SK-N-SH (cell line): ENCODE measurements at regions of chr2 and their contacts with region 1.

Region 1: DNA sequence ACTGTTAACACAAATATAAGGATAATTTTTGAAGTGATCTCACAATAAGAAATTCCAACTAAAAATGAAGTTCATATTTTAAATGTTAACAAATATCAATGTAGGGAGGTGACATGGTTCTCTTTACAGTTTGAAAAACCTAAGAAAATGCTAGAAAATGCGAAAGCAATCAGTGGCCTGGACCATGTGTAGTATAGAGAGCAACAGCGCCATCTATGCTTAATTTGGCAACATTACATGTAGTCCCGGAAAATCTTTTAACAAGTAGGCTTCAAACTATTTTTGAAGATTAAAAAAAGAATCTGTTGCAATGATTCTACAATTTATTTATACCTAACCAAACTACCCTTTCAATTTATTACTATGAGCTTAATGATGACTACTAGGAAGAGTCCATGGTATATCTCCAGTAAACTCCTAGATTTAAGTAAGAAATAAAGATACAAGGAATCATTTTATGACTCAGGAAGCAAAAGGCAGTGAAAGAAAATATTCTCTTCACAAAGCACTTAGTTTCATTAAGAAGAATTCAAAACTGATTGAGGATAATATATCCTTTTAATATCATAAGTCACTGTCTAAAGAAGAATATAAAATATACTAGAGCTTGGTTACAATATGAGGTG is 33.3 kb downstream of the NDUFA10 start:
- DNase-seq: peak; percentile 63
- H3K4me3 ChIP-seq: peak overlapping the region in 1 of 2 experiments; percentile 33; a peak in 1 of 4 replicates
- H3K27ac ChIP-seq: no peak overlapping the region
- H3K4me1 ChIP-seq: peaks cover 0 to 7% of the 10 kb centered on the region in 2 experiments; a peak in 1 of 4 replicates
- H3K27me3 ChIP-seq: no peaks in the 10 kb centered on the region
- CTCF ChIP-seq: peak; percentile 95
- EP300 ChIP-seq: no peak
- RAD21 ChIP-seq: peak; percentile 88

Region 2: DNA sequence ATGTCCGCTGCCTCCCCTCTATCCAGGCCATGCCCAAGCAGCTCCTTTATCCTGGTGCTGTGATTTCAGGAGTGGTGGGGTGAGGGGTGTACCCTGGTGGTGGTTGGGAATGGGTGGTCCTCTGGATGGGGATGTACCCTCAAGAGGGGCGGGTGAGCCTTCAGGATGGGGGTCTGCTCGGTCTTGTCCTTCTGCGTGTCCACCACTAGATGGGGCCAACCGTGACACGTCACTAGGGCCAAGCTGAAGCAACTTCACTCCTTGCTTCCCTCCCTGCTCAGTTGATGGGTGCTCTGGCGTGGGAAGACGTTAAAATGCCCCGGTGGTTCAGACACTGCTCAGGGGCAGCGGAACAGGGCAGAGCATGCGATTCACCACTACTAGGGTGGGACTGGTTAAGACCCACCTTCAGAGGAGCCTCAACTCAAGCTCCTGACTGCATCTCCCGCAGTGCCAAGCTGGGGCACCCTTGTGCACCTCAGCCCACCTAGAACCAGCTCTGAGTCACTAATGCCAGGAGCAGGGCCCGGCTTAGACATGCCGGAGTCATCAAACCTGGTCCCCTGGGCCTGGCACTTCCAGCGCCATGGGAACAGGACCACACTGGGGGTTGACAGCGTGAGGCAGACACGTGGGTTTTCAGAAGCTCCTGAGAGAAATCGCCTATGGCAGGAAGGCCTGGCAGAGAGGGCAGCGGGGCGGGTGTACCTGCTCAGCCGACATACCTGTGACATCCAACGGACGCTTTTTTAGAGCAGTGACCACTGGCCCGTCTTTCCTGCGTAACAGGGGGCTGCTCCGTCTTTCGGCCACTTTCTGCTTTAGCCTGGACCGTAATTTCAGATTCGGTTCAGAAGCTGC is 847.7 kb before region 1 on chr2:
- CTCF ChIA-PET with region 1: interaction called, 19 read pairs
- POLR2A ChIA-PET with region 1: no interaction called
- DNase-seq: peak; percentile 85
- H3K4me3 ChIP-seq: no peak overlapping the region
- H3K27ac ChIP-seq: no peak overlapping the region
- H3K4me1 ChIP-seq: no peaks in the 10 kb centered on the region; a peak in 1 of 4 replicates
- H3K27me3 ChIP-seq: no peaks in the 10 kb centered on the region
- CTCF ChIP-seq: peak; percentile 68
- EP300 ChIP-seq: no peak
- RAD21 ChIP-seq: peak; percentile 71

Region 3: DNA sequence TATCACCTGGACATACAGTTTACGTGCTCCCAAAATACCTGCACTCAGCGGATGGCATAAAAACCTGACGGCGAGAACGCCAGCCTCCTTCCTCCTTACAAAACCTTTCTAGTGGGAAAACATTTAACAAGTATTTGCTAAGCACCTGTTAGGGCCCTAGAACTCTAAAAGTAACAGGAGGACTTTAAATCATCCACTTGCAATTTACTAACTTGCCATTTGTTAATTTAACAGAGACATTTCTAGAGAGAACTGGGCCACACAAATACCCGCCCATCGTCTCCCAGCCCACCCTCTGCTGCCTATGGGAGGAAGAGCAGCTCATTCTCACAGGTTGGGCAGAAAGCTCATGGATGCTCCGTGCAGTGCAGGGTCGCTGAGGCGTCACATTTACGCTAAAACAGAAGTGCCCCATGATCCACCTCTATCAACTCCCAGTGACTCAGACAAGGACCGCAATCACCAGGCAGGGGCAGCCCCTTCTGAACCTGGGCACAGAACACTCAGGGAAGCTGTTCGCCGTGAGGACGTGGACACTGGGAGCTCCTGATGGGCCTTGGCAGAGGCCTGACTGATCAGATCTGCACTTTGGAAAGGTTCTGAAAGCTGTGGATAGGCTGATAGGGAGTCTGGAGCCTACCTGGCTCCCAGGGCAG is 697.9 kb before region 1 on chr2:
- CTCF ChIA-PET with region 1: no interaction called
- POLR2A ChIA-PET with region 1: no interaction called
- DNase-seq: no peak
- H3K4me3 ChIP-seq: no peak overlapping the region
- H3K27ac ChIP-seq: no peak overlapping the region
- H3K4me1 ChIP-seq: peaks cover 0 to 47% of the 10 kb centered on the region in 2 experiments; a peak in 2 of 4 replicates
- H3K27me3 ChIP-seq: no peaks in the 10 kb centered on the region
- CTCF ChIP-seq: no peak
- EP300 ChIP-seq: no peak
- RAD21 ChIP-seq: no peak

Region 4: DNA sequence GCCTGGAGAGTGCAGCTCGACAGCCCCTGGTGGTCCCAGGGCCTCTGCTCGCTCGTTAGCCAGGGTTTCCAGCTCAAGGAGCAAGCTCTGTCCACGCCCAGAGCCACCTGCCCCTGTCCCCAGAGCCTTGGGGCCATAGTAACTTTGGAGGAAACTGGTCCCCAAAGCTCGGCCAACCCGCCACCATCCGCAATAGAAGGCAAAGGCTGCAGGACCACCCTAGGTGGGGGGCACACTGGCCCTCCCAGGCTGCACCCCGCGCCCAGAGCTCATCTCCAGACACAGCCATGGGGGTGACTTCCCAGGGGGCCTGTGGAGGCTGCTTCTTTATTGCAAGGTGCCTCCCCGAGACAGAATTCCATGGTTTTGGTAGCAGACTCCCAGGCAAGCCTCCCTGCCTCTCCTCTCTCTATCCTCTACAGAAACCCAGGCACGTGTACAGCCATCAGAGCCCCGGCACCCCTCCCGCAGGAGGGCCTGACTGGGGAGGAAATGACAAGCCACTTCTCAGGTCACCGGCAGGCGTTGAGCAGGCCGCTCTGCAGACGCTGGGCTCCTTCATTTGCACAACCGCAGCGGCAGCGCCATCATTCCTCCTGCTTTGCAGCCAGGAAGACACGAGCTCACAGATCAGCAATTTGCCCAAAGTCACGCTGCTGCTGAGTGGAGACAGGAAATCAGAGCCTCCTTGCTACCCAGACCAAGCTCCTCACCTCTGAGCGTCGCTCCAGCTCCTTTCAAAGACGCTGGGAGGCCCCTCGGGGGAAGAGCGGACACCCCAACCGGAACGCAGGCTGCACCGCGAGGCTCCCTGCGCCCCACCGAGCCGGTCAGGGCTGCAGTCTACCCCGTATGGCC is 46.9 kb before region 1 on chr2:
- CTCF ChIA-PET with region 1: interaction called, 24 read pairs
- POLR2A ChIA-PET with region 1: no interaction called
- DNase-seq: no peak
- H3K4me3 ChIP-seq: no peak overlapping the region
- H3K27ac ChIP-seq: no peak overlapping the region
- H3K4me1 ChIP-seq: no peaks in the 10 kb centered on the region; a peak in 1 of 4 replicates
- H3K27me3 ChIP-seq: no peaks in the 10 kb centered on the region
- CTCF ChIP-seq: no peak
- EP300 ChIP-seq: no peak
- RAD21 ChIP-seq: no peak

Region 5: GRCh38 chr2:239970004-239970623 is 21.7 kb before region 1 on chr2:
- CTCF ChIA-PET with region 1: interaction called, 16 read pairs
- POLR2A ChIA-PET with region 1: no interaction called
- DNase-seq: peak; percentile 27
- H3K4me3 ChIP-seq: no peak overlapping the region
- H3K27ac ChIP-seq: no peak overlapping the region
- H3K4me1 ChIP-seq: no peaks in the 10 kb centered on the region; a peak in 1 of 4 replicates
- H3K27me3 ChIP-seq: no peaks in the 10 kb centered on the region
- CTCF ChIP-seq: no peak
- EP300 ChIP-seq: no peak
- RAD21 ChIP-seq: no peak

Region 6: DNA sequence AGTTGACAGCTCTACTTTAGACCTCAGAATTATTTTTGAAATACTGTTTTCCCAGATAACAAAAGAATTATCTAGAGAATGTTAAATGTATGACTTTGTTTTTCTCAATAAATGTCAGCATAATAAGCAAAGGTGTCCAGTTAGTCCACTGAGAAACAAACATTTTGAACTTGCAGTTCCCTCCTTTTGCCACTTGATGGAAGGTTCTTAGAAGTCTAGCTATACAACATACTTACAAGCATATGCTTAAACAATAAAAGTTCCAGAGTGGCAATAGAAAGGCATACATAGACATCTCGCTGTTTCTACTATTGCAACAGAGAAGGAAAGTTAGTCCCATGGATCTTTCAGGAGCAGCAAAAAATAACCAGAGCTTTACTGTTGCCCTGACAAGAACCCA is 21.5 kb after region 1 on chr2:
- CTCF ChIA-PET with region 1: interaction called, 20 read pairs
- POLR2A ChIA-PET with region 1: no interaction called
- DNase-seq: no peak
- H3K4me3 ChIP-seq: no peak overlapping the region
- H3K27ac ChIP-seq: no peak overlapping the region
- H3K4me1 ChIP-seq: no peaks in the 10 kb centered on the region
- H3K27me3 ChIP-seq: no peaks in the 10 kb centered on the region
- CTCF ChIP-seq: peak; percentile 47
- EP300 ChIP-seq: no peak
- RAD21 ChIP-seq: no peak

Region 7: DNA sequence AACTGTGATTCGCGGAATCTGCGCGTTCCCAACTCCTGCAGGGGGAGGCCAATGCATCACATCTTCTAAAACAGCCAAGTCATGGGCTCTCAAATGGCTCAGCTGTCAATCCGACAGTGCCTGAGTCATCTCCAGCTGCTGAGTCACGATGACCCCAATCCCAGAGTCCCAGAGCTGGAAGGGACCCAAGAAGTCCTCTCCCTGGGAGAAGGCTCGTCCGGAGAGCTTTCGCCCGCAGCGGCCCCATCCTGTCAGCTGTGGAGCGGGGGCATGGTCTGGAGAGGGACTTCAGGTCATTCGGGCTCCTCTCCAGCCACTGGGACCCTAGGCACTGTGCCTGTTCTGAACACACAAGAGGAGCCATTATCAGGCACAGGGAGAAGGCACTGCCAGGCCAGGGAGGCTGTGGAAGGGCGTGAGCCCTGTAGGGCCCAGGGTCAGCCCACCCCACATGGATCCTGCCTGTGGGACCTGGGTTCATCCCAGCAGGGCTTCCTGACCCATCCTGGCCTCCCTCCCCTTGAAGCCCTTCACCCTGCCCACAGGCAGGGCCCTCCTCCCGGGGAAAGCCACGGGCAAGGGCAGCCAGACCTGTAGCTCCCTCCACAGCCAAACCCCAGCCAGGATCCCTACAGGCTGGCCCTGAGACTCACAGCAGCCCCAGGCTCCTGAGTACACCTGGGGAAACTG is 396.0 kb after region 1 on chr2:
- CTCF ChIA-PET with region 1: no interaction called
- POLR2A ChIA-PET with region 1: no interaction called
- DNase-seq: no peak
- H3K4me3 ChIP-seq: no peak overlapping the region
- H3K27ac ChIP-seq: peak overlapping the region in 1 of 2 experiments; percentile 41; a peak in 1 of 4 replicates
- H3K4me1 ChIP-seq: 0 out of 4 replicates have a peak, but pooled peaks cover 0 to 6% of the 10 kb centered on the region in 2 experiments
- H3K27me3 ChIP-seq: no peaks in the 10 kb centered on the region
- CTCF ChIP-seq: no peak
- EP300 ChIP-seq: peak in 1 of 2 experiments; percentile 37; a peak in 1 of 4 replicates
- RAD21 ChIP-seq: no peak